ENCODE measurements at regions of chr1 and their contacts with region 1.

Region 1: GRCh38 chr1:233613252-233614174 is at the start of gene KCNK1:
- DNase-seq: peak; percentile 90
- H3K4me3 Mint-ChIP-seq: peak within 1 kb of the TSS; percentile 89
- H3K27ac Mint-ChIP-seq: peak within 1 kb of the TSS; percentile 77
- H3K4me1 Mint-ChIP-seq: peaks cover 22% of the 10 kb centered on the region
- H3K27me3 Mint-ChIP-seq: no peaks in the 10 kb centered on the region
- CTCF ChIP-seq: no peak
- total RNA-seq, gene KCNK1: 38.0 and 39.2 TPM in 2 replicates

Region 2: GRCh38 chr1:233440951-233441401 is 172.5 kb before region 1 on chr1:
- CTCF ChIA-PET with region 1: interaction called, 5 read pairs
- intact Hi-C with region 1: loop called (anchors 5 kb)
- DNase-seq: peak; percentile 40
- H3K4me3 Mint-ChIP-seq: no peak overlapping the region
- H3K27ac Mint-ChIP-seq: no peak overlapping the region
- H3K4me1 Mint-ChIP-seq: no peaks in the 10 kb centered on the region
- H3K27me3 Mint-ChIP-seq: no peaks in the 10 kb centered on the region
- CTCF ChIP-seq: peak; percentile 67

Region 3: DNA sequence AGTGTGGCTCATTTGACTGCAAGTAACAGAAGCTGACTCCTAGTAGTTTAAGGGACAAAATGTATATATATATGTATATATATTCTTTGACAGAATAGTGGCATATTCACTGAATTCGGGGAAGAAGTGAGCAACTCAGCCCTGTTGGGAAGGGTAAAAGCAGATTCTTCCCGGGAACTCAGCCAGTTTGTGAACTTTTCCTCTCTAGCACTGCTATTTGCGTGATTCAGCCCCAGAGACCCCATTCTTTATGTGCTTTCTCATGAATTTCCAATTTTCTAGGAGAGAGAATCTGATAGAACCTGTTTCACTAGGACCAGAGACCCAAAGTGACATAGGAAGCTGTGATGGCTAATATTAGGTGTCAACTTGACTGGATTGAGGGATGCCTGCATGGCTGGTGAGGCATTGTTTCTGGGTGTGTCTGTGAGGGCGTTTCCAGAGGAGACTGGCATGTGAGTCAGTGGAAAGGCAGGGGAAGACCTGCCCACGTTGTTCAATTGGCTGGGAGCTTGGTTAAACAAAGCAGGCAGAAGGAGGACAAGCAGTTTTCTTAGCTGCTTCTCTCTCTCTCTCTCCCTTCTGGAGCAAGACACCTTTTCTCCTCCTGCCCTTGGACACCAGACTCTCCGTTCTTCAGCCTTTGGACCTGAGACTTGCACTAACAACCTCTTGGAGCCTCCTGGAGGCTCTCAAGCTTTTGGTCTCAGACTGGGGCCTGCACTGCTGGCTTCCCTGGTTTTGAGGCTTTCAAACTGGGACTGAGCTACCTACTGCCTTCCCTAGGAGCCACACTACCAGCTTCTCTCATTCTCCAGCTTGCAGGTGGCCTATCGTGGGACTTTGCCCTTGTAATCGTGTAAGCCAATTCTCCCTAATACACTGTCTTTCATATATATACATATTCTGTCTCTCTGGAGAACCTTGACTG is 93.0 kb before region 1 on chr1:
- CTCF ChIA-PET with region 1: no interaction called
- intact Hi-C with region 1: loop called (anchors 5 kb)
- DNase-seq: peak; percentile 80
- H3K4me3 Mint-ChIP-seq: no peak overlapping the region
- H3K27ac Mint-ChIP-seq: peak overlapping the region; percentile 40
- H3K4me1 Mint-ChIP-seq: peaks cover 21% of the 10 kb centered on the region
- H3K27me3 Mint-ChIP-seq: no peaks in the 10 kb centered on the region
- CTCF ChIP-seq: no peak

Region 4: DNA sequence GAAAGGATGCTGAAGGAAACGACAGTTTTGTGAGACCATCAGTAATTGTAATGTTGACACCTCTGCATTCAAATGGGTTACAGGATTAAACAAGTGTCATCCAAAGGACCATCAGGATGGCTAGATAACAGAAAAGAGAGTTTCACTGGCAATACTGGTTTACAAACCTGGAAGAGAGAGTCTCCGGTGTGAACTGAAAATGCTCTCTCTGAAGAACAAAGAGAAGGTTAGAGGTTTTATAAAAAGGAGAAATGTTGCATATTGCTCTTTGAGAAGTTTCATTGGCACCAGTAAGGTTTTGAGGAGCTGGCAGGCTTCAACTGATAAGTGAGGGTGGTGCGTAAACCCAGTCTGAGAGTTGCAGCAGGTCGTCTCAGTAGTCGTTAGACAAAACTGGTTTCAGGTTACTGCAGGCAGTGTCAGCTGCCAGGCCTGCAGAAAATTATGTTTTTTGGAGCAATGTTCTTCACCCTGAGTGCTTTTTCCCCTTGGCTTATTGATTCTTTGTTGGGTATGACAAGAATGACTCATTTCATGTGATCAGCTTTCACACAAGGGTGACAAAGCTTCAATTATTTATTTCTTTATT is 42.6 kb after region 1 on chr1:
- CTCF ChIA-PET with region 1: interaction called, 4 read pairs
- intact Hi-C with region 1: loop called (anchors 2 kb)
- DNase-seq: peak; percentile 39
- H3K4me3 Mint-ChIP-seq: peak overlapping the region; percentile 70
- H3K27ac Mint-ChIP-seq: peak overlapping the region; percentile 99
- H3K4me1 Mint-ChIP-seq: peaks cover 73% of the 10 kb centered on the region
- H3K27me3 Mint-ChIP-seq: no peaks in the 10 kb centered on the region
- CTCF ChIP-seq: no peak

Region 5: DNA sequence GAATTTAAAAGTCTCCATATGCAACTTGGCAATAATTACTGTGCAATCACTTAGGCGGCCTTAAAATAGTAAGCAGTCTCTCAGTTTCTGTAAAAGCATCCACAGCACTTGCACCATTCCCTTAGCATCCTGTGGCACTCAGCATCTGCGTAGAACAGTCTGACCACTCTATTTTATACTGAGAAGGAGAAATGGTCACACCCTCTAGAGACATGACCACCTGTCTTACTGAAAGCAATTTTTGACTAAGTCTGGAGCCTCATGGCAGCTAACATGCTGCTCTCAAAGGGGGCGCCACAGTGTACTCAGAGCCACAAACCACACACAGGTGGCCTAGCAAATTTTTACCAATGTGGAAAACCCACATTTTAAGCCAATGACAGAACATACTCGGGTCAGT is 62.4 kb after region 1 on chr1:
- CTCF ChIA-PET with region 1: no interaction called
- intact Hi-C with region 1: loop called (anchors 2 kb)
- DNase-seq: no peak
- H3K4me3 Mint-ChIP-seq: no peak overlapping the region
- H3K27ac Mint-ChIP-seq: peak overlapping the region; percentile 73
- H3K4me1 Mint-ChIP-seq: peaks cover 51% of the 10 kb centered on the region
- H3K27me3 Mint-ChIP-seq: no peaks in the 10 kb centered on the region
- CTCF ChIP-seq: no peak

Region 6: DNA sequence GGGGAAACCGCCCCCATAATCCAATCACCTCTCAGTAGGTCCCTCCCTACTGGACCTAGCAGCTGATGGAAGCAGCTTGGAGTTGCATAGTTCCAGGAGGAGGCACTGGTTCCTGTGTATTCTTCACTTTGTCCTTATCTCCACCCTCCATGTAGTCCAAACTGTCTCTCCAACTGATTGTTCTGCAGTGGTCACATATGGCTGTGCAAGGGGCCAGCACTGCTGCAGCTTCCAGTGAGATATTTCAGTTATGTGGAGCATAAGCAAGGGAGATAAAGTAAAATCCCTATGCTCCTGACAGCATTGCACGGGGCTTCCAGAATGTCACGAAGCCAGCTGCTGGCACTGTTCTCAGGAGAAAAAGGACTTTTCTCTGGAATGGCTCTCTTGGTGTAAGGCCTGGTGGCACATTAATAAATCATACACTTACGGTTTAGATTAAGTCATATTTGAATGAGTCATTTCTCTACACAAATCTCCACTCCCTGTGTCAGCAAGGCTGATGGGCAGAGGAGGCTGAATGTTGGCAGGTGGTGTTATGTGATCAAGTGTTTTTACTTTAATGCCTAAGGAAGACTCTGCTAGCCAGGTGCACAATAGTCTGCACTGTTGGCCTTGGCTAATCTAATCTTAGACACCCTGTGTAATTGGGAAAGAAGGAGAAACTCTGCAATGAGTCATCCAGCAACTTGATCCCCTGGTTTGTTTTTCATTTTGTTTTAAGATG is 93.8 kb after region 1 on chr1:
- CTCF ChIA-PET with region 1: no interaction called
- intact Hi-C with region 1: loop called (anchors 2 kb)
- DNase-seq: peak; percentile 80
- H3K4me3 Mint-ChIP-seq: peak overlapping the region; percentile 65
- H3K27ac Mint-ChIP-seq: peak overlapping the region; percentile 95
- H3K4me1 Mint-ChIP-seq: peaks cover 61% of the 10 kb centered on the region
- H3K27me3 Mint-ChIP-seq: no peaks in the 10 kb centered on the region
- CTCF ChIP-seq: no peak

Measured in Calu3 (cell line).